Naive thymus-derived CD4-positive, alpha-beta T cell (primary cell): ENCODE measurements at regions of chr16 and their contacts with region 1.

Region 1: GRCh38 chr16:87203060-87203656 is 114.0 kb downstream of the C16orf95 start:
- DNase-seq: peak in 8 of 9 donors; percentile 4 to 62 (median 13)
- ATAC-seq: peak; percentile 40
- H3K4me3 ChIP-seq: no peak overlapping the region
- H3K4me3 Mint-ChIP-seq: no peak overlapping the region
- H3K27ac ChIP-seq: no peak overlapping the region
- H3K27ac Mint-ChIP-seq: no peak overlapping the region
- H3K4me1 ChIP-seq: no peaks in the 10 kb centered on the region
- H3K4me1 Mint-ChIP-seq: peaks cover 0 to 5% (median 0%) of the 10 kb centered on the region in 7 donors
- H3K27me3 ChIP-seq: no peaks in the 10 kb centered on the region
- H3K27me3 Mint-ChIP-seq: peaks cover 7 to 13% (median 9%) of the 10 kb centered on the region in 5 donors

Region 2: GRCh38 chr16:86142801-86143236 is 1060.3 kb before region 1 on chr16:
- CTCF ChIA-PET with region 1: no interaction called
- POLR2A ChIA-PET with region 1: no interaction called
- intact Hi-C with region 1: no loop called
- DNase-seq: no peak
- ATAC-seq: no peak
- H3K4me3 ChIP-seq: no peak overlapping the region
- H3K4me3 Mint-ChIP-seq: no peak overlapping the region
- H3K27ac ChIP-seq: no peak overlapping the region
- H3K27ac Mint-ChIP-seq: no peak overlapping the region
- H3K4me1 ChIP-seq: no peaks in the 10 kb centered on the region
- H3K4me1 Mint-ChIP-seq: no peaks in the 10 kb centered on the region
- H3K27me3 ChIP-seq: no peaks in the 10 kb centered on the region
- H3K27me3 Mint-ChIP-seq: peaks cover 3 to 17% (median 5%) of the 10 kb centered on the region in 5 donors

Region 3: DNA sequence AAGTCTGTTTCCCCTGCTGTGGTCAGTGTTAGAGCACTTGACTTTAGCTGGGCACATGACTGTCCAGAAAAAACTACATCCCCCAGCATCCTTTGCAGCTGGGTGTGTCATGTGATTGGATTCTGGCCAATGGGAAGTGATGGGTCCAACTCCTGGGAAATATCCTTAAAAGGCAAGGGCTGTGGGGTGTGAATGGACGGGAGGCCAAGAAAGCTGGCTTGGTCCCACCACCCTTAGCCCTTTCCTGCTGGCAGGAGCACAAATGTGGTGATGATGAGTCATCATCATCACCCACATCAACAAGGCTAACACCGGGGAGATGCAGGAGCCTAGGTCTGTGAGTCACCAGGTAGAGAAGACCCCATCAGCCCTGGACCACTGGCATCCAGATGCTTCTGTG is 227.7 kb before region 1 on chr16:
- CTCF ChIA-PET with region 1: no interaction called
- POLR2A ChIA-PET with region 1: no interaction called
- intact Hi-C with region 1: no loop called
- DNase-seq: no peak
- ATAC-seq: no peak
- H3K4me3 ChIP-seq: no peak overlapping the region
- H3K4me3 Mint-ChIP-seq: no peak overlapping the region
- H3K27ac ChIP-seq: no peak overlapping the region
- H3K27ac Mint-ChIP-seq: no peak overlapping the region
- H3K4me1 ChIP-seq: no peaks in the 10 kb centered on the region
- H3K4me1 Mint-ChIP-seq: no peaks in the 10 kb centered on the region
- H3K27me3 ChIP-seq: no peaks in the 10 kb centered on the region
- H3K27me3 Mint-ChIP-seq: peaks cover 0 to 39% (median 10%) of the 10 kb centered on the region in 5 donors

Region 4: DNA sequence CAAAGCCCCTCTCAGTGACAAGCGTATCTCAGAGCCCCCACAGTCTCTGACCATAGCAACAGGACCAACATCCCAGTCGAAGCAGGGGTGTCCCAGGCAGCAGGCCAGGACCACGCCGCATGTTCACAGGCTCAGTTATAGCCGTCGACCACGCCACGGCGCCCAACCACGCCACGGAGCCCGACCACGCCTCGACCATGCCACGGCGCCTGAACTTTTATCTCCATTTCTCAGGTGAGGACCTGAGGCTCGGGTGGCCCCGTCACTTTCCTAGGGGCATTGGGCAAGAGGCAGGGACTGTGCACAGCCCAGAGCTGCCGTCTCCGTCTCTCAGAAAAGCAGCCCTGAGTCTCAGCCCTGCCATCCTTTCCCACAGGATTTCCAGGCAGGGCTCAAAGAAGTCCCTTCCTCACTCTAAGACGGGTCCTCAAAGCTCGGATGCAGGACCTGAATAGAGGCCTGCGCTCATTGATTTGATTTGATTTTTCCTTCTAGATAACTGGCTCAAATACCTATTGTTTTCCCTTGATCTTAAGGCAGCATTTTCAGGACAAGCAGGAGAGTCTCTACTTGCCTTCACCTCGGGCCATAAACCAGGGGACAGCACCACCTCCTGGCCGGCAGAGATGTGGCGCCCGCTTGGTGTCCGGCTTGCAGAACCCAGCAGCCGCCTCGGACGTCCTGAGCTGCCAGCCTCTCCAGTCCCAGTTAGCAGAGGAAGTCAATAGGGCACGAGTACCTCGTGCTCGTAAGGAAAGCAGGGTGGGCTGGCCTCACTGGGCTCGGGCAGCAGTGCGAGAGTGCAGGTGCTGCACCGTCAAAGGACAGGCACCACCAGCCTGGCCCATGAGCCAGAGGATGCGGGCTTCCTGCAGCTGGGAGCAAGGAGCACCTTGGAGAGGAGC is 75.3 kb after region 1 on chr16:
- CTCF ChIA-PET with region 1: no interaction called
- POLR2A ChIA-PET with region 1: no interaction called
- intact Hi-C with region 1: loop called in 1 of 2 experiments (anchors 1 kb)
- DNase-seq: peak in 3 of 9 donors; percentile 12 to 57 (median 14)
- ATAC-seq: peak; percentile 45
- H3K4me3 ChIP-seq: no peak overlapping the region
- H3K4me3 Mint-ChIP-seq: no peak overlapping the region
- H3K27ac ChIP-seq: no peak overlapping the region
- H3K27ac Mint-ChIP-seq: no peak overlapping the region
- H3K4me1 ChIP-seq: no peaks in the 10 kb centered on the region
- H3K4me1 Mint-ChIP-seq: peaks cover 0 to 16% (median 5%) of the 10 kb centered on the region in 7 donors
- H3K27me3 ChIP-seq: no peaks in the 10 kb centered on the region
- H3K27me3 Mint-ChIP-seq: peaks cover 0 to 14% (median 11%) of the 10 kb centered on the region in 5 donors